AG04449 (cell line): ENCODE measurements at regions of chr12 and their contacts with region 1.

Region 1: DNA sequence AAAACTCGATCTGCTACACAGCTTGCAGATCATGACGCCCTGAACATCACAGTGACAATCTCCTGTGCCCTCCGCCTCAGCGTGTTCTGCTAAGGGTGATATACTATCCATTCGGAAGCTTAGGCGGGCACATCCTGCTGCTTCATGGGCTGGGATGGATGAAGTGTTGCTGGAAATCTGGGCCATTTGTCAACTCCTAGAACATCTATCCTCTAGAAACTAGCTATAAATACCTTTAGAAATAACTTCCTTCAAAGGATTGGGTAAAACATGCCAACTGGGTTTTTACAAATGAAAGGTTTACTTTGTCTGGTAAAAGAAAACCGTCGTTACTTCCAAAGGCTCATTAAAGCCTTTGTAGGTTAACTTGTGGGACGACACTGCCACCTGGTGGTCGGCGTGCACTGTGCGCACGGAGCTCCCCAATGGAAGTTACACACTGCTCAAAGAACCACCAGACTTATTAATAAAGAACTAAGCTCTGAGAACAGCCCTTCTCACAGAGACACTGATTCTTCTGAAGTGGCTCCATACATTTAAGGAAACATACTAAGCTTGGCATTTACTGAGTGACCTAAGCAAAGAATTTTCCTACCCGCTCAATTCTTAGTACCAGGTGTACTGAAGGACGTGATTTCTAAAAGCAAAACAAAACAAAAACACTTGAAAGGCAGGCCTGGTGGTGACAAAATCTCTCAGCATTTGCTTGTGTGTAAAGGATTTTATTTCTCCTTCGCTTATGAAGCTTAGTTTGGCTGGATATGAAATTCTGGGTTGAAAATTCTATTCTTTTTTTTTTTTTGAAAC is 21.6 kb upstream of the CACNA2D4 start:
- DNase-seq: peak; percentile 28
- H3K4me3 ChIP-seq: no peak overlapping the region
- CTCF ChIP-seq: peak; percentile 89

Region 2: GRCh38 chr12:1184402-1184801 is 755.6 kb before region 1 on chr12:
- CTCF ChIA-PET with region 1: no interaction called
- POLR2A ChIA-PET with region 1: no interaction called
- DNase-seq: no peak
- H3K4me3 ChIP-seq: no peak overlapping the region
- CTCF ChIP-seq: no peak

Region 3: DNA sequence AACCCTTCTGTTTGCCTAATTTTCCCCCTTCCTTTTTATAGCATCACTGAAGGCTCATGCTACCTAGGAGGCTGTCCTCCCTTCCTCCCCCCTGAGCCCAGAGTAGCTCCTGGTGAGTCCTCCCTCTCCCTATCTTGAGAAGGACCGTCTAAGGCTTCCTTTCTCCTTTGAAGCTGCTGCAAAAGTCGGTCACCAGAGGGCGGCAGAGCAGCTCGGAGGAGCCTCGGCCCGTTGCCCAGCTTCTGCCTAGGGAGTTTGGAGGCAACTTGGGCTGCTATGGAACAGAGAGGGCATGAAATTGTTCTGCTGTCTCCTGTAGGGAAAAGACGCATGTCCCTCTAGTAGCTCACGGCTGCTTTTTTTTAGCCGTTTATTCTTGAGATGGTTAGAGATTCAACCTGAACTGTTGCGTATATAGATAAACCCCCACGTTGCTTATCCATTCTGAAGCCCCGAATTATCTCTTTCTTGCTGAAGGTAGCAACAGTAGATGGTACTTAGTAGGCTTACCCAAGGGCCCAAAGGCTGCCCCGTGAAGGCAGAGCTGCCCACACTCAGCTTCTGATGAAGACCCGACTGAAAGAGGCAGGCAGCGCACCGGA is 305.3 kb before region 1 on chr12:
- CTCF ChIA-PET with region 1: interaction called, 27 read pairs
- POLR2A ChIA-PET with region 1: no interaction called
- DNase-seq: no peak
- H3K4me3 ChIP-seq: no peak overlapping the region
- CTCF ChIP-seq: peak; percentile 94

Region 4: GRCh38 chr12:1719139-1719538 is 220.9 kb before region 1 on chr12:
- CTCF ChIA-PET with region 1: no interaction called
- POLR2A ChIA-PET with region 1: no interaction called
- DNase-seq: no peak
- H3K4me3 ChIP-seq: no peak overlapping the region
- CTCF ChIP-seq: no peak

Region 5: DNA sequence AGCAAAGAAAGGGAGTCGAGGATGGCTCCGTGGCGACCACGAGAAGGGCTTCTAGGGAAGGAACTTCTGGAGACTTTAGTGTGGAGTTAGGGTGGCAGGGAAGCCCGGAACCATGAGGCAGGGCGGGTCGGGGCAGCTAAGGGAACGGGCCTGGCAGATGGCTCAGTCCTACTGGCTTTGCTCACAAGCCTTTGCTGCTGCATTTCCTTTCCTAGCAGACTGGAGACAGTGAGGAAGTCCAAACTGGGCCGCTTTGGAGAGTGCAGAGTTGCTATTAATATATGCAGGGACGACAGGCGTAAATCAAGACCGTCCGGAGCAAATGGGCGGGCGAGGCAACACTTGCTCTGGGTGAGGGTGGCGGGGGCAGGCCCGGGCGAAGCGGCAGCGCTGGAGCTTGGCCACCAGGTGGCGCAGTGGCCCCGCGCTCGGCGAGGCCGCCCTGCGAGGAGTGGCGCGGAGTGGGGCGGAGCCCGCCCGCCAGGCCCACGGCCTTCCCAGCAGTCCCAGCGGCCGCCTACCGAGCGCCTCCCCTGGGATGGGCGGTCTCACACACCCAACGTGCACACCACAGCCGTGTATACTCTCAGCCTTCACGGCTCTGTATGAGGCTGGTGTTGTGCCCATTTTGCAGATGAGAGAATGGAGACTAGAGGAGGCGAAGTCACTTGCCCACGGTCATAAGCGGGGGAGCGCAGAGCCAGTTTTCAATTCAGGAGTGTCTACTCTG is 144.1 kb before region 1 on chr12:
- CTCF ChIA-PET with region 1: interaction called, 264 read pairs
- POLR2A ChIA-PET with region 1: no interaction called
- DNase-seq: no peak
- H3K4me3 ChIP-seq: peak overlapping the region; percentile 47
- CTCF ChIP-seq: peak; percentile 88

Region 6: GRCh38 chr12:1862973-1863372 is 77.0 kb before region 1 on chr12:
- CTCF ChIA-PET with region 1: interaction called, 11 read pairs
- POLR2A ChIA-PET with region 1: interaction called, 4 read pairs
- DNase-seq: no peak
- H3K4me3 ChIP-seq: no peak overlapping the region
- CTCF ChIP-seq: no peak

Region 7: DNA sequence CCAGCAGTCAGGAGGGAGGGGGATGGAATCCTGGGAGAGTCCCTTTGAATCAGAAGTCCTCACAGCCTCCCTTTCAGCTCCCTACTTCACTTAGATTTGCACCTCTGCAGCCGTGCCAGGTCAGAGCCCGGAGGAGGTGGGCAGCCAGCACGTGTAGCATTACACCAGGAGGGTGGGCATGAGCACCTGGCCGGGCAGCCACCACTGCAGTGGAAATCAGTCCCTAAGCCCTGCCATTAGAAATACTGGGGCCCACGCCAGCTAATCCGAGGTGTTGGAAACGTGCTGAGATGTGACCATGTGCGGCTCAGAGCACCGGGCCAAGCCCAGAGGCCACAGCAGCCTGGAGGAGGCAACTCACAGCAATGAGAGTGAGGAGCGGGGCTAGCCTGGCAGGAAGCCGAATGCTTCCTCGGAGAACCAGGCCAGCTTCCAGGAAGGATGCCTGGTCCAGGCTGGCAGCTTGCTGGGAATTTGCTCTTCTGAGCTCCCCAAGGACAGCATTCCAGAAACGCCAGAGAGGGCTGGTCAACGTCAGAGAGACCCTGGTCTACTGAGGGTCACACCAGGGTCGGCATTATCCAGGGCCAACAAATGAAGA is 12.2 kb before region 1 on chr12:
- CTCF ChIA-PET with region 1: interaction called, 70 read pairs
- POLR2A ChIA-PET with region 1: no interaction called
- DNase-seq: no peak
- H3K4me3 ChIP-seq: no peak overlapping the region
- CTCF ChIP-seq: no peak

Region 8: GRCh38 chr12:1966561-1967226 is 26.7 kb after region 1 on chr12:
- CTCF ChIA-PET with region 1: interaction called, 13 read pairs
- POLR2A ChIA-PET with region 1: no interaction called
- DNase-seq: no peak
- H3K4me3 ChIP-seq: no peak overlapping the region
- CTCF ChIP-seq: no peak

Region 9: GRCh38 chr12:2467447-2468195 is 527.6 kb after region 1 on chr12:
- CTCF ChIA-PET with region 1: no interaction called
- POLR2A ChIA-PET with region 1: no interaction called
- DNase-seq: no peak
- H3K4me3 ChIP-seq: no peak overlapping the region
- CTCF ChIP-seq: no peak